Heart right ventricle (tissue), 16 donors: ENCODE measurements at regions of chrX and their contacts with region 1.

Region 1: DNA sequence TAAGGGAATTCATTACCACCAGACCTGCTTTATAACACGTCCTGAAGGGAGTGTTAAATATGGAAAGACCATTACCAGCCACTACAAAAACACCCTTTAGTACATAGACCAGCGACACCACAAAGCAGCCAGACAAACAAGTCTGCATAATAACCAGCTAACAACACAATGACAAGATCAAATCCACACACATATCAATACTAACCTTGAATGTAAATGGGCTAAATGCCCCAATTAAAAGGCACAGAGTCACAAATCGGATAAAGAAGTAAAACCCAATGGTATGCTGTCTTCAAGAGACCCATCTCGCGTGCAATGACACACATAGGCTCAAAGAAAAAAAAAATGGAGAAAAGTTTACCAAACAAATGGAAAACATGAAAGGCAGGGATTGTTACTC is 36.9 kb downstream of the FGF16 start:
- DNase-seq: no peak
- ATAC-seq: no peak
- H3K4me3 ChIP-seq: no peak overlapping the region
- H3K27ac ChIP-seq: no peak overlapping the region
- H3K4me1 ChIP-seq: no peaks in the 10 kb centered on the region
- H3K27me3 ChIP-seq: no peaks in the 10 kb centered on the region
- CTCF ChIP-seq: no peak

Region 2: DNA sequence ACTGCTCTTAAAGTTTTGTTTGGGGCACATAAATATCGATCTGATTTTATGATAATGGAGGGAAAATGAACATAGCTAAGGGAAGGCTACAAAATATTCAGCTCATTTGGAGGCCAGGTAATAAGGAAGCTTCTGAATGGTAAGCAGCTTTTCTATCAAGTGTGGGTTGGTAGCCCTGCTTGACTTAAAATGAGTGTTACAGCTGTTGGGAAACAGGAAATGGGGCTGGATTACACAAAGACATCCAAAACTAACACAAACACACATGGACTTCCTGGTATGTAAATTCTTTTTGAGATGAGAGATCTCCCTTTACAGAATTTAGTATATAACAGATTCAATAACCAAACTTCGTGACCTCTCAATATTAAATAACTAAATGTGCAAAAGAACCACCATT is 21.2 kb after region 1 on chrX:
- intact Hi-C with region 1: loop called in 1 of 10 experiments (anchors 2 kb)
- DNase-seq: no peak
- ATAC-seq: peak in 4 of 8 donors; percentile 26 to 61 (median 45)
- H3K4me3 ChIP-seq: no peak overlapping the region
- H3K27ac ChIP-seq: peak overlapping the region in 4 of 10 donors; percentile 37 to 51 (median 49)
- H3K4me1 ChIP-seq: peaks cover 0 to 18% (median 3%) of the 10 kb centered on the region in 9 donors
- H3K27me3 ChIP-seq: peaks cover 0 to under 1% (median 0%) of the 10 kb centered on the region in 7 donors
- CTCF ChIP-seq: no peak